ENCODE measurements at regions of chr15 and their contacts with region 1.

Region 1: DNA sequence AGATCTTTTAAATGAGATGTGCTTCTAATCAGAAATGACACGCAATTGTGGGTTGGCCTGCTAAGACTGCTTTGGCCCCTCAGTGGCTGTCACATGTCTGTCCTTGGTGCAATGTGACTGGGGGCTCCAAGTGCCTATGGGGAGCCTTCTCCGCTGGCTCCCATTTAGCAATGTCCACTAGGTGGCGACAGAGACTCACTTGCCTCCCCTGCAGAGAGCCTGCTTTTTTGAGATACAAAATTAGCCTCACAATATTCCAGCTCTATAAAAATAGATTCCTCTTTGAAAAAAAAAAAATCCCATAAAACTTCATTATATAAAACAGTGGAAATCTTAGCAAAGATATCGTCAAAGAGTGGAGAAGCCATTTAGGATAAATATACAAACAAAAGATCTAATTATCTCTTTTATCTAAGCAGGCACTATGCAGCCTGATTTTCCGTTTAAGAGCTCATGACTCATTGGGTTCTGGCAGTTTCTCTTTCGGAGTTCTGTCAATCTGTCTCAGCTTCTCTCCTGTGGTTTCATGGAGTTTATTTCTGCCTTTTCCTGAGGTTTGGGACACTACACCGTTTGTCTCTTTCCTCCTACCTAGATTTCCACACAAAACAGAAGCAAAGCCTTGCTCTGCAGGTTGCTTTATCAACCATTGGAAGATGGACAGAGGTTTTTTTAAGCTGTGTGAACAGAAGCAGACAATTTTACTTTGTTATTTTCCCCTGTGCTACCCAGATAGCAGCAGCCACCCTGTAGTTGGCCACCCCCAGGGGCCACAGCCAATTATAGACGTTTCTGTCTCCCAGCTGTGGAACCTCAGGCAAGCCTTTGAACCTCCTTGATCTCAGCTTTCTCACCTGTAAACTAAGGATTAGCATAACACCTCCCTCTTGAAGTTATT is 68.4 kb upstream of the TNFAIP8L3 start:
- DNase-seq: peak; percentile 30
- H3K4me3 ChIP-seq: peak overlapping the region; percentile 43
- H3K27ac ChIP-seq: no peak overlapping the region
- H3K27me3 ChIP-seq: peaks cover 15% of the 10 kb centered on the region
- CTCF ChIP-seq: peak; percentile 98

Region 2: GRCh38 chr15:51144021-51144532 is 19.0 kb before region 1 on chr15:
- CTCF ChIA-PET with region 1: interaction called, 22 read pairs
- POLR2A ChIA-PET with region 1: no interaction called
- DNase-seq: peak; percentile 20
- H3K4me3 ChIP-seq: no peak overlapping the region
- H3K27ac ChIP-seq: no peak overlapping the region
- H3K27me3 ChIP-seq: peaks cover 3% of the 10 kb centered on the region
- CTCF ChIP-seq: no peak

Region 3: DNA sequence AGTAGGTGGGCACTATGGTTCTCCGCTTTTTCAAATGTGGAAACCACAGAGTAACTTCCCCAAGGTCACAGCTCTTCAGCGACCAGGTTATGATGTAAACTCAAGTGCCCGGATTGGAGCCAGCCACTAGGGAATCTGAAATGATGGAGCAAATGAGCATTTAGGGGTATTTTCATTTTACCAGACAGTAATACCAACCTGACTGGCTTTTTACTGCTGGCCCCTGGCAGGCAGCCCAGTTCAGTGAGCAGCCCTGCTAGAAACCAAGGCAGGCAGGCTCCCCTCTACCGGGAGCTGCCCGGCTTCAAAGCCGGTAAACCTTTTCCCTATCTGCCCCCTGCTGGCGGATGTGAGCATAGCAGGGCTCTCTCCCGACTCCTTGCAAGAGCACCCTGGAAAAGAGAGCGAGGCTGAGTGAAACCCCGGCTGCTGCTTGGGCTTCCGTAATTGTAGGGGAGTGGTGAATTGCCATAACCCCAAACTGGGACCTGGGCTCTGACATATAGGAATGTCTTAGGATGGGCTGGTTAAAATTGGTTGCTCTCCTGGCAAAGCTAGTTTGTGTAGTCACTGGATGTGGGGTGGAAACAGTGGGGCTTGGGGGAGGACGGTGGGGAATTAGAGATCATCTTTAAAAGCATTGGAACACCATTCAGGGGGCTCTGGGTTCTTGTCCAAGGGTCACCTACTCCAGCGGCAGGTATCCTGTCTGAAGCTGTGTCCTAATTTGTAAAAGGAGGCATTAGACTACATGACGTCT is 29.6 kb after region 1 on chr15:
- CTCF ChIA-PET with region 1: interaction called, 196 read pairs
- POLR2A ChIA-PET with region 1: interaction called, 3 read pairs
- DNase-seq: peak; percentile 68
- H3K4me3 ChIP-seq: no peak overlapping the region
- H3K27ac ChIP-seq: no peak overlapping the region
- H3K27me3 ChIP-seq: peaks cover 26% of the 10 kb centered on the region
- CTCF ChIP-seq: peak; percentile 97

Region 4: GRCh38 chr15:51227940-51228783 is 65.0 kb after region 1 on chr15:
- CTCF ChIA-PET with region 1: interaction called, 26 read pairs
- POLR2A ChIA-PET with region 1: no interaction called
- DNase-seq: peak; percentile 27
- H3K4me3 ChIP-seq: no peak overlapping the region
- H3K27ac ChIP-seq: no peak overlapping the region
- H3K27me3 ChIP-seq: peaks cover 2% of the 10 kb centered on the region
- CTCF ChIP-seq: 0 out of 2 replicates have a peak, but pooled peaks have one; percentile 4

Region 5: GRCh38 chr15:51281368-51281967 is 118.4 kb after region 1 on chr15:
- CTCF ChIA-PET with region 1: interaction called, 26 read pairs
- POLR2A ChIA-PET with region 1: no interaction called
- DNase-seq: no peak
- H3K4me3 ChIP-seq: no peak overlapping the region
- H3K27ac ChIP-seq: no peak overlapping the region
- H3K27me3 ChIP-seq: peaks cover 31% of the 10 kb centered on the region
- CTCF ChIP-seq: peak; percentile 88

Region 6: GRCh38 chr15:51401872-51402517 is 238.9 kb after region 1 on chr15:
- CTCF ChIA-PET with region 1: interaction called, 106 read pairs
- POLR2A ChIA-PET with region 1: no interaction called
- DNase-seq: no peak
- H3K4me3 ChIP-seq: no peak overlapping the region
- H3K27ac ChIP-seq: no peak overlapping the region
- H3K27me3 ChIP-seq: peaks cover 38% of the 10 kb centered on the region
- CTCF ChIP-seq: peak; percentile 80

Measured in AG04450 (cell line).